ENCODE measurements at regions of chr5 and their contacts with region 1.

Region 1: DNA sequence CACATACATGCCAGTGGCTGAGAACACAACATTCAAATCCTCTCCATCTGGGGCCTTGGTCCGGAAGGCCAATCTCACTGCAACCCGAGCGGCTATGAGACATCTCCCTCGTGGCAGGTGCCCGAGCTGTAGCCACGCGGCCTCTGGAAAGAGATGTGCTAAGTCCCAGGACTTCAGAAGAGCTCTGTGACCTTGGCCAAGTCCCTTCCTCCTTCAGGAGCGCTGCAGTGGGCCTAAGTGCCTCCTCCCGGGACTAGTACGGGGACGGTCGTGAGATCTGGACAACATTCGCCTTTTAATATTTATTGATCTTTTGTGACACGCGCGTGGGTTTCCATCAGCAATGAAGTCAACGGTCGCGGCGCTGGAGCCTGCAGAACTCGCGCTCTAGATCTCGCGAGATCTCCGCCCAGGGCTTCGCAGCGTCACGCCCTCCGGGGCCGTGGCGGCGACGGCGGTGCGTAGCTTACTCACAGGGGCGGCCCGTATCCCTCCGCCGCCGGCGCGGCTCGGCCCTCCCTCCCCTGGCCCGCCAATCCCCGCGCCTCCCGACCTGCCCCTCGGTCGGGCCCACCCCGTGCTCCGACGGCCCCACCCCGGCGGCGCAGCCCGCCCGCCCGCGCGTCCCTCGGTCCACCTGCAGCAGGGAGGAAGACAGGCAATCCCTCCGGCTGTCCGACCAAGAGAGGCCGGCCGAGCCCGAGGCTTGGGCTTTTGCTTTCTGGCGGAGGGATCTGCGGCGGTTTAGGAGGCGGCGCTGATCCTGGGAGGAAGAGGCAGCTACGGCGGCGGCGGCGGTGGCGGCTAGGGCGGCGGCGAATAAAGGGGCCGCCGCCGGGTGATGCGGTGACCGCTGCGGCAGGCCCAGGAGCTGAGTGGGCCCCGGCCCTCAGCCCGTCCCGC is at the start of gene UBE2D2:
- DNase-seq: peak; percentile 90 to 97
- H3K4me3 ChIP-seq: peak within 1 kb of the TSS; percentile 65 to 98 (median 80)
- H3K27ac ChIP-seq: peak within 1 kb of the TSS; percentile 80
- H3K4me1 ChIP-seq: peaks cover 0 to 4% (median 4%) of the 10 kb centered on the region in 4 experiments; a peak in 5 of 7 replicates
- H3K27me3 ChIP-seq: no peaks in the 10 kb centered on the region
- CTCF ChIP-seq: no peak
- EP300 ChIP-seq: no peak
- POLR2A ChIP-seq: peak; percentile 49 to 86
- RAD21 ChIP-seq: peak in 1 of 2 experiments; percentile 5; a peak in 1 of 4 replicates
- total RNA-seq, gene UBE2D2: 194 and 203 TPM in 2 replicates

Region 2: GRCh38 chr5:139301808-139302499 is 259.0 kb before region 1 on chr5:
- CTCF ChIA-PET with region 1: no interaction called
- POLR2A ChIA-PET with region 1: no interaction called
- DNase-seq: no peak
- H3K4me3 ChIP-seq: no peak overlapping the region
- H3K27ac ChIP-seq: no peak overlapping the region
- H3K4me1 ChIP-seq: peaks cover 0 to 34% (median 15%) of the 10 kb centered on the region in 4 experiments; a peak in 5 of 7 replicates
- H3K27me3 ChIP-seq: no peaks in the 10 kb centered on the region
- CTCF ChIP-seq: no peak
- EP300 ChIP-seq: no peak
- POLR2A ChIP-seq: no peak; a peak in 1 of 3 replicates
- RAD21 ChIP-seq: no peak

Region 3: GRCh38 chr5:139470821-139471300 is 90.1 kb before region 1 on chr5 and contains the start of gene SMIM33:
- CTCF ChIA-PET with region 1: no interaction called
- POLR2A ChIA-PET with region 1: interaction called, 10 read pairs
- DNase-seq: no peak
- H3K4me3 ChIP-seq: no peak within 1 kb of the TSS
- H3K27ac ChIP-seq: no peak within 1 kb of the TSS
- H3K4me1 ChIP-seq: peaks cover 6 to 33% (median 14%) of the 10 kb centered on the region in 4 experiments
- H3K27me3 ChIP-seq: 0 out of 7 replicates have a peak, but pooled peaks cover 0 to 2% (median 0%) of the 10 kb centered on the region in 4 experiments
- CTCF ChIP-seq: no peak
- EP300 ChIP-seq: no peak
- POLR2A ChIP-seq: no peak
- RAD21 ChIP-seq: no peak
- total RNA-seq, gene SMIM33: not detected in 2 replicates

Region 4: GRCh38 chr5:139524932-139525585 is 35.9 kb before region 1 on chr5:
- CTCF ChIA-PET with region 1: interaction called, 18 read pairs
- POLR2A ChIA-PET with region 1: interaction called, 17 read pairs
- DNase-seq: no peak
- H3K4me3 ChIP-seq: peak overlapping the region in 1 of 4 experiments; percentile 38; a peak in 1 of 8 replicates
- H3K27ac ChIP-seq: no peak overlapping the region
- H3K4me1 ChIP-seq: peaks cover 6 to 32% (median 28%) of the 10 kb centered on the region in 4 experiments; a peak in 6 of 7 replicates
- H3K27me3 ChIP-seq: no peaks in the 10 kb centered on the region
- CTCF ChIP-seq: no peak
- EP300 ChIP-seq: no peak
- POLR2A ChIP-seq: no peak
- RAD21 ChIP-seq: no peak

Region 5: DNA sequence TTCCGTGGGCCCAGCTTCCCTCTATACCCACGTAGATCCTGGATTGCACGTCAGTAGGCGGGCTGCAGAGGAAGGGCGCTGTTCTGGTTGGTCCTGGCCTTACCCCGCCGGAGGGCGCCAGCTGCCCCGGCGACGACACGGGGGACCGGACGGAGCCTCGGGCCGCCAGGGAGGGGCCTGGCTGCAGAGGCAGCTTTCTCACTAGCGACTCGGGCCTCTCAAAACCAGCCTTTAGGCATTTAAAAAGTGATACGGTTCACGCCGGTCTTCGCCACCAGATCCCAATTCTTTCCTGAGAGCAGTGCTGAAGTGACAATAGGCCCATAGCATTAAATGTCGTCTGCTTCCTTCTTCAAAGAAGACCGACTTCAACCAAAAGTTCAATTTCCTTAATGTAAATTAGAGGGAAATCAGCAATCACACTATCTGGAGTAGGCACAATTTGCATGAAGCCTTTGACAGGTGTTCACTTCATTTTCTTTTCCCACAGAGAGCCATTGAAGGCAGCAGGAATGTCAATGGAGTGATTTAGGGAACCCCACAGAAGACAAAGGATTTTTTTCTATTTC is 17.5 kb before region 1 on chr5:
- CTCF ChIA-PET with region 1: interaction called, 4 read pairs
- POLR2A ChIA-PET with region 1: interaction called, 35 read pairs
- DNase-seq: peak in 1 of 2 experiments; percentile 83
- H3K4me3 ChIP-seq: peak overlapping the region in 2 of 4 experiments; percentile 17 to 44; a peak in 5 of 8 replicates
- H3K27ac ChIP-seq: no peak overlapping the region; the same call in 1 of the 2 replicates
- H3K4me1 ChIP-seq: peaks cover 0 to 10% (median 1%) of the 10 kb centered on the region in 4 experiments; a peak in 3 of 7 replicates
- H3K27me3 ChIP-seq: no peaks in the 10 kb centered on the region
- CTCF ChIP-seq: peak; percentile 47 to 70 (median 60)
- EP300 ChIP-seq: no peak
- POLR2A ChIP-seq: no peak
- RAD21 ChIP-seq: peak; percentile 42 to 57

Region 6: GRCh38 chr5:139574641-139575312 is 13.8 kb after region 1 on chr5:
- CTCF ChIA-PET with region 1: interaction called, 43 read pairs
- POLR2A ChIA-PET with region 1: interaction called, 49 read pairs
- DNase-seq: no peak
- H3K4me3 ChIP-seq: no peak overlapping the region
- H3K27ac ChIP-seq: no peak overlapping the region
- H3K4me1 ChIP-seq: peaks cover 0 to 7% (median 0%) of the 10 kb centered on the region in 4 experiments; a peak in 2 of 7 replicates
- H3K27me3 ChIP-seq: no peaks in the 10 kb centered on the region
- CTCF ChIP-seq: peak in 2 of 3 experiments; percentile 48 to 67; a peak in 2 of 4 replicates
- EP300 ChIP-seq: no peak
- POLR2A ChIP-seq: no peak
- RAD21 ChIP-seq: peak; percentile 57 to 63

Region 7: GRCh38 chr5:139592289-139592688 is 31.3 kb after region 1 on chr5:
- CTCF ChIA-PET with region 1: interaction called, 4 read pairs
- POLR2A ChIA-PET with region 1: interaction called, 10 read pairs
- DNase-seq: no peak
- H3K4me3 ChIP-seq: no peak overlapping the region
- H3K27ac ChIP-seq: no peak overlapping the region
- H3K4me1 ChIP-seq: peaks cover 0 to 2% (median 0%) of the 10 kb centered on the region in 4 experiments; a peak in 1 of 7 replicates
- H3K27me3 ChIP-seq: no peaks in the 10 kb centered on the region
- CTCF ChIP-seq: no peak
- EP300 ChIP-seq: no peak
- POLR2A ChIP-seq: no peak
- RAD21 ChIP-seq: no peak

Region 8: GRCh38 chr5:139696894-139697658 is 136.1 kb after region 1 on chr5:
- CTCF ChIA-PET with region 1: no interaction called
- POLR2A ChIA-PET with region 1: interaction called, 10 read pairs
- DNase-seq: no peak
- H3K4me3 ChIP-seq: peak overlapping the region; percentile 28 to 58 (median 34); a peak in 7 of 8 replicates
- H3K27ac ChIP-seq: 0 out of 2 replicates have a peak overlapping the region, but pooled peaks have one; percentile 20
- H3K4me1 ChIP-seq: peaks cover 24 to 51% (median 38%) of the 10 kb centered on the region in 4 experiments
- H3K27me3 ChIP-seq: peaks cover 0 to 4% (median under 1%) of the 10 kb centered on the region in 4 experiments; a peak in 4 of 7 replicates
- CTCF ChIP-seq: no peak
- EP300 ChIP-seq: no peak
- POLR2A ChIP-seq: peak in 1 of 2 experiments; percentile 51; a peak in 1 of 3 replicates
- RAD21 ChIP-seq: no peak

Measured in H1 (cell line).